Activated CD4-positive, alpha-beta memory T cell treated with anti-CD3 and anti-CD28 coated beads for 36 hours (primary cell): ENCODE measurements at regions of chr20 and their contacts with region 1.

Region 1: DNA sequence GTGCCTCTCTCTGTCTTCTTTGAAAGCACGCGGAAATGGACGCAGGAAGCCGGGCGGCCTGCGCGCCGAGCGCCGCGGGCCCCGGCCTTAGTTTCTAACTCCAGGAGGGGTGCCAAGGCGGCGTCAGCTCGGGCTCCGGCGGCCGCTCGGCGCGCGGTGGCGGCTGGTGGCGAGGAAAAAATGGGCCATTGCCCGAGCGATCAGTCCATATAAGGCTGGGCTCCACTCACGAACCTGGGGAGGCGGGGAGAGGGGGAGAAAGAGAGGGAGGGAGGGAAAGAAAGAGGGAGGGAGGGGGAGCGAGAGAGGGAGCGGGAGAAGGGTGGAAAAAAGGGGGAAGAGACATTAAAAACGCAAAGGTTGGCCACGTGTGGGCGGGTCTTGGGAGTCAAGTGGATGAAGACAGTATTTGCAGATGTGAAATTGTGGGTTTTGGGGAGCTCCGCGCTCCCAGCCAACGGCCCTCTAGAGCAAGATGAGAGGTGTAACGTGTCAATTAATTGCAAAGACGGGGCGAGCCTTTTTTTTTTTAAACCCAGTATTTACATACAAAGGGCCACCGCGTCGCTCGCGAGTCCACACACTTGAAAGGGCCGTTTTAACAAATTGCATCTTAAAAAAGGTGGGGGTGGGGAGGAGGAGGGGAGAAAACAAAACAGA is at the start of gene NKX2-2:
- DNase-seq: no peak
- H3K4me3 Mint-ChIP-seq: peak within 1 kb of the TSS; percentile 35
- H3K27ac Mint-ChIP-seq: no peak within 1 kb of the TSS
- H3K4me1 Mint-ChIP-seq: peaks cover 46% of the 10 kb centered on the region
- H3K27me3 Mint-ChIP-seq: peaks cover 77% of the 10 kb centered on the region
- total RNA-seq, gene NKX2-2: not detected

Region 2: GRCh38 chr20:21099751-21100577 is 414.0 kb before region 1 on chr20:
- CTCF ChIA-PET with region 1: interaction called, 3 read pairs
- POLR2A ChIA-PET with region 1: interaction called, 3 read pairs
- intact Hi-C with region 1: loop called (anchors 2 kb)
- DNase-seq: peak; percentile 68
- H3K4me3 Mint-ChIP-seq: peak overlapping the region; percentile 74
- H3K27ac Mint-ChIP-seq: peak overlapping the region; percentile 63
- H3K4me1 Mint-ChIP-seq: peaks cover 30% of the 10 kb centered on the region
- H3K27me3 Mint-ChIP-seq: peaks cover 68% of the 10 kb centered on the region

Region 3: GRCh38 chr20:21189761-21190523 is 324.1 kb before region 1 on chr20:
- CTCF ChIA-PET with region 1: no interaction called
- POLR2A ChIA-PET with region 1: no interaction called
- intact Hi-C with region 1: no loop called
- DNase-seq: no peak
- H3K4me3 Mint-ChIP-seq: no peak overlapping the region
- H3K27ac Mint-ChIP-seq: no peak overlapping the region
- H3K4me1 Mint-ChIP-seq: no peaks in the 10 kb centered on the region
- H3K27me3 Mint-ChIP-seq: no peaks in the 10 kb centered on the region

Region 4: DNA sequence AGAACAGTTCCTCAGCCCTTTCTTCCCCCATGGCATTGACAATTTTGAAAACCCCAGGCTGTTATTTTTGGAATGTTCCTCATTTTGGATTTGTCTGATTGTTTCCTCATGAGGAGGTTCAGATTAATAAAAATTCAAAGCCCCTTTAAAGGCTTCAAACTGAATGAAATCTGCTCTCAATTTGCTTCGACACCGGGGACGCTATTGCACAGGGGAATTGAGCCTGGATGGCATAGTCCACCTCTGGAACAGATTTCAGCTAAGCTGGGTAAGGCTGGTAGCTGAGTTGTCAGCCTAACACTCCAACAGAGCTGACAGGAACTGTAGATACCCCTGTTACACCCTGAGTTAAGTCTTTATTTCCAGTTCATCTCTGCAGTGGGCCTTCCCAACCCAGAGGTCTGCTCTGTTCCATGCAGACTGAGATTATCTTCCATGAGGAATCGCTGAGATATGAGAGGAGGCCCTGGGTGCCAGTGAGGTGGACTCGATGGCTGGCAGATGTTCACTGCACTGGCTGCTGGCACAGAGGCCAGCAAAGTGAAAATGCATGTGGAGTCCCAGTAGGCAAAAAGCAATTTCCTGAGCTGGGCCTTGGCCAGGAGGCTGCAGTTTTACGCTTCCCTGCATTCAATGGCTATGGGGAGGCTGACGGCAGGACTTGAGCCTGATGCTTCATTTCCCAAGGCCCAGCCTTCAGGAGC is 118.2 kb after region 1 on chr20:
- CTCF ChIA-PET with region 1: no interaction called
- POLR2A ChIA-PET with region 1: no interaction called
- intact Hi-C with region 1: no loop called
- DNase-seq: no peak
- H3K4me3 Mint-ChIP-seq: no peak overlapping the region
- H3K27ac Mint-ChIP-seq: no peak overlapping the region
- H3K4me1 Mint-ChIP-seq: no peaks in the 10 kb centered on the region
- H3K27me3 Mint-ChIP-seq: peaks cover 13% of the 10 kb centered on the region